ENCODE measurements at regions of chr5 and their contacts with region 1.

Region 1: DNA sequence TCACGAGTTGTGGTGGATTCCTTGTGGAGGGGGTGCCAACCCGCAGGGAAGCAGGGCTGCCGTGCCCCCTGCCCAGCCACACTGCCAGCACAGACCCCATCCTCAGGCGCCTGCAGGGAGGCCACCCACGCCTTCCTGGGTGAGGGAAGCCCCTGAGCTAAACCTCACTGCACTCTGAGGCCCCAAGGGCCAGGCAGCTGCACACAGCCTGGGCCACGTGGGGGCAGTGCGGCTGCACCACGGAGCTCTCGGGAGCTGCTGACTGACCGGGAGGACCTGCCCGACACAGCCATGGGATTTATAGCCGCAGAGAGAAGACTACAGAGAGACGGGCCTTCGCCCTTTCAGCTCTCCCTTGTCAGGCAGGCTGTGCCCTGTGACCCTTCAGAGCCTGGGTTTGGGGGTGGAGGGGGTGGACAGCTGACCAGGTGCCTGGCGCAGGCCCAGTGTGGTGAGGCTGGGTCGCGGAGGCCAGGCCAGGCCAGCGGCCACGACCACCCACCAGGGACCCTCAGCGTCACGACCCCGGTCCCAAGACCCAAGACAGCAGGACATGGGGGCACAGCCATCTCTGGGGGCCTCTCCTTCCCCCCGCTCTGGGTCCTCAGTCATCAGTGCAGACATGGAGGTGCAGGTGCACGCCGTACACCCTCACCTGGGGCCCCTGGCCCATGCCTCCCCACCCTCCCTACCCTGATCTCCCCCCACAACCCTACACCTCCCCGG is 4.3 kb upstream of the AHRR start:
- DNase-seq: peak; percentile 92
- CTCF ChIP-seq: peak; percentile 94

Region 2: DNA sequence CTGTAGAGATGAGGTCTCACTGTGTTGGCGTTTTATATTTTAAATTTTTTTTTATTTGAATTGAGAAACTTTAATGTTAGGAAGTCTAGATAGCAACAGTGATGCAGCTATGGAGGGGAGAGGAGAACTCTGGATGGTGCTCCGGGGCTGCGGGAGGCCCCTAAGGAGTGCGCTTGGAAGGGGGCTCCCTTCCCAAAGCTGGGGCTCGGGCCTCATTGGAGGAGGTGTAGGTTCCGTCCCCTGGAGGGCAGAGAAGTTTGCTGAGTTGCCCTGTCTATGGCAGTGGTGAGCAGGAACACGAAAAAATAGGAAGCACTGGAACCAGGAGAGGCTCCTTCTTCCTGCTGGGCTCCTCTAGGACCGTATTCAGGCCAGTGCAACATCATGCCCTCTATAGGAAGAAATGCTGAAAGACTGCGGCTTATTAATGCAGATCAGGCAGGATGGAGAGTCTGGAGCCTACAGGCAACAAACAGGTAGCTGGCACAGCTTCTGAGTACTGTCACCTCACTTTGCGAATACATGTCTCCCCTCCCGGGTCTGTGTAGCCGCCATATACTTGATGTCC is 20.4 kb after region 1 on chr5:
- CTCF ChIA-PET with region 1: interaction called, 23 read pairs
- POLR2A ChIA-PET with region 1: no interaction called
- DNase-seq: no peak
- CTCF ChIP-seq: no peak

Region 3: GRCh38 chr5:424301-425110 is 107.3 kb after region 1 on chr5:
- CTCF ChIA-PET with region 1: interaction called, 123 read pairs
- POLR2A ChIA-PET with region 1: no interaction called
- DNase-seq: peak; percentile 86
- CTCF ChIP-seq: no peak

Region 4: GRCh38 chr5:442335-443238 is 125.3 kb after region 1 on chr5 and contains the start of gene EXOC3:
- CTCF ChIA-PET with region 1: interaction called, 30 read pairs
- POLR2A ChIA-PET with region 1: no interaction called
- DNase-seq: peak; percentile 95
- CTCF ChIP-seq: no peak

Region 5: DNA sequence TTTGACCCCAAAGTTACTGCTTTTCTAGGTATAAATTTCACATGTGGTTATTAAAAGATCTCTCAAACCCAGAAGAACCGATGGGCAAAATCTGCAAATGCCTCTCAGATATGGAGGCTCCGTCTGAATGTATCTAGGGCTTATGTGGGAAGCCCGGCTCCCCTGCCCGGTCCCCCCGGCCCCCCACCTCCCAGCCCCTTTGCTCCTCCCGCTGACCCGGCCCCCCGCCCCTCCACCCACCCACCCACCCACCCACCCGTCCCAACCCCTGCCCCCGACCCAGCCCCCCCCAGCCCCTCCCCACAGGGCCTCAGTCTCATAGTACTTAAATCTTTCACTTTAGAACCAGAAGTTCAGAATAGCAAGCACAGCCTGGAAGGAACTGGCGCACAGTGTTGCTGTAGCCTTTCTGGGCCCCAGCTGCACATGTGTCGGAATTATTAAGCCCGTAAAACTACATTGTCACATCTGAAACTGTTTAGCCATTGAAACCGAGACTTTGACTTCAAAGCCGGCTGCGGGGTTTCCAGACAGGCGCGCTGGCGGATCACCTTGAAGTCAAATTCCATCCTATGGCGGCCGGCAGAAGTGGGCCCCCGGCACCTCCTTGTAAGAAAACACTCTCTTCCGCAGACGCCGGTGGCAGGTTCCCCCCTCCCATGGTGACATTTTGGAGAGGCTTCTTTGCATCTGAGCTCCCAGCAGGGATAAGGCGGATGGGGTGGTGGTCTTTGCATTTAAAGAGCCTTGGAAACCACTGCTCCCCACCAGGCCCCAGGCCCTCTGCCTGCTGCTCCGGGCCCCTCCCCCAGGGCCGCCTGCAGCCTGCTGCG is 704.1 kb after region 1 on chr5:
- CTCF ChIA-PET with region 1: no interaction called
- POLR2A ChIA-PET with region 1: no interaction called
- DNase-seq: no peak
- CTCF ChIP-seq: no peak

Measured in GM10248 (cell line).